ENCODE measurements at regions of chr6 and their contacts with region 1.

Region 1: DNA sequence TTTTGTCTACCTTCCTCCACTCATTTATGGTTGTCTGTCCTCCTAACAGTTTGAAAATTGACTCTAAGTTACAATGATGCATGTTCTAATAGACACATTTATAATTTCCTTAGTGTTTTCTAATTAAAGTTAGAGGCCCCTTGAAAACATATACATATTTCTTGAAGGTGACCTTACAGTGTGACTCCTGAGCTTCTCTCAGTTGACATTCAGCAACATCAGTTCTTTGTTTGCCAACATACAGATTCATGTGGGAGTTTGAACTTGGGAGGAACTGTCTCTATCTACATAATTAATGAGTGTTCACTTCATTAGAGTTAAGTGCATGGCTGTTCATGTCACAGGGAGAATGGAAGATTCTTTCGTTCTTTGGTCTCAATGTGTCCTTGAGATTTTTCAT is 658.2 kb downstream of the GRIK2 start:
- DNase-seq: no peak
- H3K4me3 ChIP-seq: no peak overlapping the region
- H3K4me3 Mint-ChIP-seq: no peak overlapping the region
- H3K27ac Mint-ChIP-seq: no peak overlapping the region
- H3K4me1 ChIP-seq: no peaks in the 10 kb centered on the region
- H3K4me1 Mint-ChIP-seq: no peaks in the 10 kb centered on the region
- H3K27me3 ChIP-seq: no peaks in the 10 kb centered on the region
- H3K27me3 Mint-ChIP-seq: peaks cover 3% of the 10 kb centered on the region
- CTCF ChIP-seq: no peak

Region 2: DNA sequence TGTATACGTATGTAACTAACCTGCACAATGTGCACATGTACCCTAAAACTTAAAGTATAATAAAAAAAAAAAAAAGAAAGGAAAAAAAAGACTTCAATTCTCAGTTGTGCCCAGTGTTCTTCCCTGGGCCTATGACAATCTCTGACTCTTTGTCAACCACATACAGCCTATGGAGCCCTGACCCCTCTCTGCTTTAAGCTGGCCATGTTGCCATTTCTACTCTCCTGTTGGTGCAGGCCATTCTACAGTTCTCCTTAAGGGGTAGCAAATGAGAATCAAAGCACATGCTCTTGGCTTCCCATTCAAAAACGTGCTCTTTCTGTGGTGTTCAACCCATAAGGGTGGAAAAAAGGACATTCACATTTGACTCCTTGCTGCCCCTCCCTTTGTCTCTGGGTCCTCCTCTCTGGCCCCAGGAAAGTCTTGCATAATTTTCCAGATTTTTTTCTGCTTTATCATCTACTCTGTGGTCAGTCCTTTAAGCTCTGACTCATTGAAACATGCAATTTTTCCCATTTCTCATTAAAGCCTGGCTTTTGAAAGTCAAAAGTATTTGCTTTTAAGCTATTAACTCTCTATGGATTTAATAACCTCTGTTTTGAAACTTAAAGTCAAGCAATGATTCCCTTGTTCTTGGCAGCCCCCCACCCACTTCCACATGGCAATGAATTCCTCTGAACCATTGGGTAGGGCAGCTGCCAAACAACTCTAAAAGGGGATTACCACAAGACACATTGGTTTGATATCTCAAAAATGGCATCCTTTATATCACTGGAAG is 1849.1 kb before region 1 on chr6:
- CTCF ChIA-PET with region 1: no interaction called
- POLR2A ChIA-PET with region 1: no interaction called
- intact Hi-C with region 1: no loop called
- DNase-seq: no peak
- H3K4me3 ChIP-seq: no peak overlapping the region
- H3K4me3 Mint-ChIP-seq: no peak overlapping the region
- H3K27ac Mint-ChIP-seq: no peak overlapping the region
- H3K4me1 ChIP-seq: no peaks in the 10 kb centered on the region
- H3K4me1 Mint-ChIP-seq: no peaks in the 10 kb centered on the region
- H3K27me3 ChIP-seq: no peaks in the 10 kb centered on the region
- H3K27me3 Mint-ChIP-seq: no peaks in the 10 kb centered on the region
- CTCF ChIP-seq: no peak

Region 3: DNA sequence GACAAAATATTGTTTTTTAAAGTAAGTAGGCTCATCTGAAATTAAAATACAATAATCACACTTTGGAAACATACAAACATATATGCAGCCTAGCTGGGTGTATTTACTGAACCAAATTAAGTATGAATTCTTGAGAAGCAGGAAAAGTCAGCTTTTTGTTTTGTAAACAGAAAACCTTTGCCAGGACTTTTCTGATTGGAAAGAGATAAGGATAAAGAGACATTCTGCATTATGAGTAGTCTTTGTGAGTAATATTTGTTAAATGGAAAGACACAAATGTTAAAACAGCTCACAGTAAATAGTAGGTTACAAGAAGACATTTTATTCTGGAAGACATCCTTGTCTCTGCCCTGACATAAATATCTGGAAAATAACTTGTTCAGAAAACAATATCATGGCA is 722.6 kb after region 1 on chr6:
- CTCF ChIA-PET with region 1: no interaction called
- POLR2A ChIA-PET with region 1: no interaction called
- intact Hi-C with region 1: loop called (anchors 5 kb)
- DNase-seq: no peak
- H3K4me3 ChIP-seq: no peak overlapping the region
- H3K4me3 Mint-ChIP-seq: no peak overlapping the region
- H3K27ac Mint-ChIP-seq: no peak overlapping the region
- H3K4me1 ChIP-seq: no peaks in the 10 kb centered on the region
- H3K4me1 Mint-ChIP-seq: no peaks in the 10 kb centered on the region
- H3K27me3 ChIP-seq: no peaks in the 10 kb centered on the region
- H3K27me3 Mint-ChIP-seq: no peaks in the 10 kb centered on the region
- CTCF ChIP-seq: no peak

Measured in Caco-2 (cell line).